Vagina (tissue), 2 donors: ENCODE measurements at regions of chr12 and their contacts with region 1.

Region 1: GRCh38 chr12:113462117-113462774 is 9.4 kb downstream of the LHX5 start:
- DNase-seq: no peak
- H3K4me3 ChIP-seq: peak overlapping the region in 1 of 2 donors; percentile 21
- H3K27ac ChIP-seq: no peak overlapping the region
- H3K4me1 ChIP-seq: peaks cover 38% of the 10 kb centered on the region
- H3K27me3 ChIP-seq: peaks cover 40% of the 10 kb centered on the region
- CTCF ChIP-seq: peak; percentile 37 to 55 (median 48)
- POLR2A ChIP-seq: no peak

Region 2: DNA sequence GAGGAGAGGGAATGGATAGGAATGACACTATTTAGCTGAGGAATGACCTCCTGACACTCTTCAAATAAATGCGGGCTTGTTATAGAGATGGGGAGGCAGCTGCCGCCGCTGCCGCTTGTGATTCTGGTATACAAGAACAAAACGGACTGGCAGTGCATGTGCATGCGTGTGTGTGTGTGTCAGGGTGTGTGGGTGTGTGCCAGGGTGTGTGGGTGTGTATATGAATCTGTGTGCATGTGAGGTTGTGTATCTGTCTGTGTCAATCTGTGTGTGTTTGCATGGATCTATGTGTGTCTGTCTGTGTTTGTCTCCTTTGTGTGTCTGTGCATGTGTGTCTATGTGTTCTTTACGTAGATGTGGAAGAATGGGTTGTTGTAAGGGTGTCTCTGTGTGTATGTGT is 35.4 kb after region 1 on chr12:
- intact Hi-C with region 1: loop called (anchors 2 kb)
- DNase-seq: no peak
- H3K4me3 ChIP-seq: no peak overlapping the region
- H3K27ac ChIP-seq: no peak overlapping the region
- H3K4me1 ChIP-seq: no peaks in the 10 kb centered on the region
- H3K27me3 ChIP-seq: no peaks in the 10 kb centered on the region
- CTCF ChIP-seq: no peak
- POLR2A ChIP-seq: no peak

Region 3: GRCh38 chr12:113899561-113900471 is 437.6 kb after region 1 on chr12:
- intact Hi-C with region 1: loop called (anchors 10 kb)
- DNase-seq: no peak
- H3K4me3 ChIP-seq: no peak overlapping the region
- H3K27ac ChIP-seq: no peak overlapping the region
- H3K4me1 ChIP-seq: peaks cover 7% of the 10 kb centered on the region
- H3K27me3 ChIP-seq: no peaks in the 10 kb centered on the region
- CTCF ChIP-seq: no peak
- POLR2A ChIP-seq: no peak